ENCODE measurements at regions of chr7 and their contacts with region 1.

Region 1: GRCh38 chr7:108181073-108181985 is 51.2 kb upstream of the LAMB4 start:
- DNase-seq: no peak
- ATAC-seq: peak; percentile 51 to 84 (median 76)
- H3K4me3 ChIP-seq: no peak overlapping the region
- H3K27ac ChIP-seq: no peak overlapping the region
- H3K4me1 ChIP-seq: peaks cover 0 to 7% (median 6%) of the 10 kb centered on the region in 3 donors
- H3K27me3 ChIP-seq: no peaks in the 10 kb centered on the region
- CTCF ChIP-seq: peak; percentile 57 to 72 (median 66)

Region 2: DNA sequence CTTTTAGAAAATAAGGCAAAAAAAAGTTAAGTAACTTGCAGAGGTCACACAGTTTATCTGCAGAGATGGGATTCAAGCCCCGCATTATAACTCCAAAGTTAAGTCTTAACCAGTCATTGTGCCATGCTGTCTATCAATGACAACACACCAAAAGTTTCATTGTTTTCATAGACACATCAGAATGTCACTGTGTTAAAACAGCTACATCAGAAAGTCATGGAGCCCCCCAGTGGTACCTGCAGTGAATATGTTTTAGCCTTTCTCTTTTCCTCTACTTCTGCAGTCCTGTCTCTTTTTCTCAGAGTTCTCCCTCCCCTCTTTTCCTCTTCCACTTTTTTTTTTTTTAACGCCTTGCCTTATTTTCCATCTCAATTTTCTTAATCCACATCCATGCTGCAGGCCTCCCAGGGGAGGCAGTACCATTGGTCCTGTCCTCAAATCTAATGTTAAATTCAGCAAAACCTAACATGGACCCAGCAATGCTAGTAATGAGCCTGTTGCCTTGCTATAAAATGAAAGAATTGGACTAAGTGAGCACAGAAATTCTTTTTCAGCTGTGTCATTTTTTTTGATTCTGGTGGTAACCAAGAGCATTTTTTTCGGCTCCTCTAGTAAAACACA is 278.7 kb after region 1 on chr7:
- intact Hi-C with region 1: loop called in 1 of 3 experiments (anchors 5 kb)
- DNase-seq: peak in 1 of 6 donors; percentile 33
- ATAC-seq: no peak
- H3K4me3 ChIP-seq: no peak overlapping the region
- H3K27ac ChIP-seq: no peak overlapping the region
- H3K4me1 ChIP-seq: peaks cover 8 to 18% (median 11%) of the 10 kb centered on the region in 3 donors
- H3K27me3 ChIP-seq: no peaks in the 10 kb centered on the region
- CTCF ChIP-seq: peak in 3 of 4 donors; percentile 16 to 30 (median 28)

Region 3: GRCh38 chr7:108497082-108497725 is 315.9 kb after region 1 on chr7:
- intact Hi-C with region 1: loop called in 2 of 3 experiments (anchors 10 kb)
- DNase-seq: peak in 3 of 6 donors; percentile 15 to 48 (median 22)
- ATAC-seq: peak; percentile 53 to 86 (median 84)
- H3K4me3 ChIP-seq: no peak overlapping the region
- H3K27ac ChIP-seq: no peak overlapping the region
- H3K4me1 ChIP-seq: no peaks in the 10 kb centered on the region
- H3K27me3 ChIP-seq: no peaks in the 10 kb centered on the region
- CTCF ChIP-seq: peak; percentile 55 to 73 (median 64)

Measured in pancreas (tissue), 10 donors.